Prostate gland (tissue), 2 donors: ENCODE measurements at regions of chr2 and their contacts with region 1.

Region 1: GRCh38 chr2:210195101-210195852 is 24.1 kb upstream of the KANSL1L start:
- DNase-seq: no peak
- H3K4me3 ChIP-seq: no peak overlapping the region
- H3K27ac ChIP-seq: no peak overlapping the region
- H3K4me1 ChIP-seq: no peaks in the 10 kb centered on the region
- H3K27me3 ChIP-seq: no peaks in the 10 kb centered on the region
- CTCF ChIP-seq: peak in 3 of 4 experiments; percentile 54 to 81 (median 80)
- POLR2A ChIP-seq: no peak

Region 2: GRCh38 chr2:209977386-209978239 is 217.7 kb before region 1 on chr2:
- intact Hi-C with region 1: loop called (anchors 2 kb)
- DNase-seq: no peak
- H3K4me3 ChIP-seq: no peak overlapping the region
- H3K27ac ChIP-seq: no peak overlapping the region
- H3K4me1 ChIP-seq: no peaks in the 10 kb centered on the region
- H3K27me3 ChIP-seq: no peaks in the 10 kb centered on the region
- CTCF ChIP-seq: peak in 3 of 4 experiments; percentile 51 to 69 (median 68)
- POLR2A ChIP-seq: no peak

Region 3: DNA sequence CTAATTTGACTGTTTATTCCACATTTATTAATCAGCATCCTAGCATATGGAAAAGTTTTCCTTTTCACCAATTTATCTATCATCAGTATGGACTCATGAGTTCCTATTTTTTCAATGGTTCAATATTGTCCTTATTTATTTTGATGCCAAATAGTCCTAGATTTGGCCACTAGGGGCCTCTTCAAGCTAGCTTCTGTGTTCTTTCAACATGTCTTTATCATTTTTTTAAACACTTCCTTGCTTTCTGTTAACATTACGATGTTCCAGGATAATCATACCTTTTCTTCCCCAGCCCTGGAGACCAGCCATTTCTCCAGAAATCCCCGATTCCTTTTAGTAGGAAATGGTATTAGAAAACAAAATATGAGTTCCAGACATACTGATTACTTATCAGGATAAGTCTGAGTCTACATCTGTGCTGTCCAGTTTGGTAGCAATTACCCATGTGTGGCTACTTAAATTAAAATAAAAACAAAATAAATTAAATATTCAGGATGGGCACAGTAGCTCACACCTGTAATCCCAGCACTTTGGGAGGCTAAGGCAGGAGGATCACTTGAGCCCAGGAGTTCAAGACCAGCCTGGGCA is 122.3 kb before region 1 on chr2:
- intact Hi-C with region 1: loop called (anchors 5 kb)
- DNase-seq: peak; percentile 8
- H3K4me3 ChIP-seq: no peak overlapping the region
- H3K27ac ChIP-seq: no peak overlapping the region
- H3K4me1 ChIP-seq: no peaks in the 10 kb centered on the region
- H3K27me3 ChIP-seq: no peaks in the 10 kb centered on the region
- CTCF ChIP-seq: peak in 3 of 4 experiments; percentile 54 to 65 (median 65)
- POLR2A ChIP-seq: no peak